ENCODE measurements at regions of chr5 and their contacts with region 1.

Region 1: GRCh38 chr5:96687812-96688453 is 25.8 kb downstream of the CAST start:
- DNase-seq: no peak
- H3K4me3 Mint-ChIP-seq: no peak overlapping the region
- H3K27ac Mint-ChIP-seq: no peak overlapping the region
- H3K4me1 Mint-ChIP-seq: peaks cover 14% of the 10 kb centered on the region
- H3K27me3 Mint-ChIP-seq: no peaks in the 10 kb centered on the region

Region 2: DNA sequence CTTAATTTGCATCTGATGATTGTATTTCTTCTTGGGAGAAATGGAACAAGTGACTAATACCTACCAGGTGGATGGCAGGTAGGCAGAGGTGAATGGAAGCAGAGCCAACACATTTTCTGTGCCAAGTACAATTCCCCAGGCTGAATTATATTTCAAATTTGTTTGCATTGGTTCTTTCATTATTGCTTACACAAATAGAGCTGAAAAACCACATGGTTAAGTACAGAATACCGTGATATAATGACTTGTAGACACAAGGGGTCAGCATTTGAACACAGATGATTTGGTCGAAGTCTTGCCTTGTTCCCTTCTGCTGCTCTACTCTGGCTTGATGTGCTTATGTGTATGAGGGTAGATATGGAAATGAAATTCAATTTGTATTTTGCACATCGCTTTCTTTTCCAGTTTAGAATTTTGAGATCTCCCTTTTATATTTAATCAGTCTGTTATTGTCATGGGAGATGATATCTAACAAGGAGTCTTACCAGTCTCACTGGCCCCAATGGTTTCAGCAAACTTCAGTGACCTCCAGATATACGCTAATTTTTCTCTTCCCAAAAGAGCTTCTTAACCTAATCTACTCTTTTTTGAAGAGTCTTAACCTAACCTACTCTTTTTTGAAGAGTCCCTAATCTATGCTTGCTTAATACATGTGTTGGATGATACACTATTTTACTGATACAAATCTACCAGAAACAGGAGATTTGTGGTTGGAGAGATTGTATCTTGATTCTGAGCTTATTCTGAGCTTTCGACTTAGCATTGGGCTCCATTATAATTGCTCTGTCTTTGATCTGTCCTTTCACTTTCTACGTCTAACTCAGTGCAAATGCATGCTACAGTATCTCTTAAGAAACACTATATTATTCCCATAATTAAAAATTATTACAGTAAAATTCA is 343.0 kb before region 1 on chr5:
- CTCF ChIA-PET with region 1: no interaction called
- intact Hi-C with region 1: loop called (anchors 1 kb)
- DNase-seq: peak; percentile 27
- H3K4me3 Mint-ChIP-seq: no peak overlapping the region
- H3K27ac Mint-ChIP-seq: no peak overlapping the region
- H3K4me1 Mint-ChIP-seq: peaks cover 25% of the 10 kb centered on the region
- H3K27me3 Mint-ChIP-seq: peaks cover 4% of the 10 kb centered on the region